ENCODE measurements at regions of chr10 and their contacts with region 1.

Region 1: DNA sequence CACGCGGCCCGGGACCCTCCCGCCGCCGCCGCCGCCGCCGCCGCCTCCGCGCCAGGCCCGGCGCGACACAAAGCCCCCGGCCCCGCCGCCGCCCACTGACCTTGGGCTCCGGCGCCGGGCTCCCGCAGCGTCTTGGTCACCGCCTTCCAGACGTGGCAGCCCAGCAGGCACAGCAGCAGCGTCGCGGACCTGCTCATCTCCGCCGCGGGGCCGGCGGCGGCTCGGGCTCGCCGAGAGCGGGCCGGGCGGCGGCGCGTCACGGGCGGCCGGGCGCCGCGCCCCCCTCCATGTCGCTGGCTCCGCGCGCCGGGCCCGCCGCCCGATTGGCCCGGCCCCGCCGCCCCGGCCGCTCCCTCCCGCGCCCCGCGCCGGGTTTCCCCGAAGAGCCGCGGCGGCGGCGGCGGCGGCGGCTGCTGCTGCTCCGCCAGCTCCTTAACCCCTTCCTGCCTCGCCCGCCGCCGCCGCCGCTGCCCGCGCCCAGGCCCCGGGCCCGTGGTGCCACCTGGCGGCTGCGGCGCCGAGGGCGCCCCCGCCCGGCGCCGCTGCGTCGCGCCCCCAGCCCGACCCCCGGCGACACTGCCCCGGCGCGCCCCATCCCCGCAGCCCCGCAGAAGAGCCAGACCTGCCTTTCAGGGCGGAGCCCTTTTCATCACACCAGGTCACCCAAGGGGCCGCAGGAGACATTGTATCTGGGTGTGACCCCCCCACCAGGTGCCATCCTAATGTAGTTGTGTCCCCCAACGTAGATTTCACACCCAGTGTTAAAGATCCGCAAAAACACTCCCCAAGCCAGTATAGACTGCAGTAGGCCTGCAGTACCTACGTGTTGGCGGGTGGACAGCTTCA is at the start of gene FAM171A1:
- DNase-seq: peak in 9 of 10 donors; percentile 52 to 96 (median 74)

Region 2: GRCh38 chr10:14918964-14919363 is 452.1 kb before region 1 on chr10:
- intact Hi-C with region 1: no loop called
- DNase-seq: no peak

Region 3: DNA sequence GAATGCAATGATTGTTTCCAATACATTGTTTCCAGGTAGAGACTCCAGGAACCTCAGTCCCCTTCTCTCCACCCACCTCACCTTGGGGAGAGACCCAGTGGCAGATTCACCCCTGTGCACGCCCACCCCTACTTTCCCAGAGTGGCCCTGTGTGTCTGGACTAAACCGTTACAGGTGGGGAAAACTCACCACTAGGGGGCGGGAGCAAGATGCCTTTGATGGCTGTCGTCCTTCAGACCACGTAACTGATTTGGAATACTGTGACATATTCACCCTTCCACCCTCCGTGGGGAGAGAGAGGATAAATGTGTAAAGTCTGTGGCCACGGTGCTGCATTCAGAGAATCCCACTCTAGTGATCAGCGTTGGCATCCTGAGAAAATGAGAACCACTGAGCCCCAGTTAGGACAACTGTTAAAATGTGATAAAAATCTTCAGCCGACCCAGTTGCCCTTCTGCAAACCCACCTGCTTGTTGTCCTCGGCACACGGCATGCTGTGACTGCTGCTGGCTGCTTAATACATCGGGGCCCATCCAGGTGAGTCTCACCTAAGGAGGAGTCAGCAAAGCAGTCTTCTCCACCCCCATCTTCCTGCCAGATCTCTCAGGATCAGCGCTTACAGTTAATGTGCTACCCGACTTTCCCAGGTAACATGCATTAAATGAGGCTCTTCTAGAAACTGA is 161.1 kb before region 1 on chr10:
- intact Hi-C with region 1: loop called (anchors 1 kb)
- DNase-seq: peak; percentile 64 to 96 (median 88)

Region 4: GRCh38 chr10:15254808-15255648 is 116.1 kb before region 1 on chr10:
- intact Hi-C with region 1: loop called (anchors 5 kb)
- DNase-seq: peak in 4 of 10 donors; percentile 39 to 89 (median 58)

Region 5: DNA sequence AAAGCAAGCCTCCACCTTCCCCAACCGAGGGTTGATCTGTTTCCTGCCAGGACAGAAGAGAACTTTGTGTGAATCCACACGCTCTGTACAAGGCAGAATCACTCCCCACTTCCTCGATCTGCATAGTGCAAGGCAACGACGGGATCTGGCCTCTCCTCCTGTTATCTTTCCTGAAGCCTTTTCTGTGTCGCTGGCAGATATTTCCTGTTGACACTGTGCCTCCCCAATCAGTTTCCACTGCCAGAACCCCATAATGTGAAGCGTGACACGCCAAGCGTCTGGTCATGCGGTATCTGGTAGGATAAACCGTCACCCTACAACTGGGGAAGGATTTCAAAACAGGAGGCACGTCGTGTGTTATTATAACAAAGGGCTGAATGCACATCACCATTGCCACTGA is 57.2 kb before region 1 on chr10:
- intact Hi-C with region 1: loop called (anchors 5 kb)
- DNase-seq: peak in 7 of 10 donors; percentile 25 to 90 (median 55)

Region 6: GRCh38 chr10:15333909-15334649 is 37.0 kb before region 1 on chr10:
- intact Hi-C with region 1: no loop called
- DNase-seq: peak in 1 of 10 donors; percentile 11

Region 7: DNA sequence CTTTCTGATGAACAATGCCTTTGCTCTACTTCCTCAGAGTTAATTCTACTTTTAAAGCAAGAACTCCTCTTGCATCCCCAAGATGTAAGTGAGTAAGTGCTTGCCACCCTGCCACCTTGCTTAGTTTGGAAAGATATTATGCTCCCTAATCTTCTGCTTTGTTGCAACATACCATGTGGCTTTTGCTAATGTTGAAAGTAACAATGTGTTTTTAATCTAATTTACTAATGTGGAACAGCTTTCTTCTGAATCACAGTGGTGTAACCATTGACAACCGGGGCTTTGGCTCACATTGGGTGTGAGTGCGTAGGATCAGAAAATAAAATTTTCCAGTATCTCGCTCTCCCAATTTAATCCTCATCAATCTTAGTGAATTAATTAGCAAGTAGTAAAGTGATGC is 811.6 kb after region 1 on chr10:
- intact Hi-C with region 1: no loop called
- DNase-seq: no peak

Measured in posterior cingulate gyrus (tissue), 11 donors.